Activated CD8-positive, alpha-beta T cell treated with anti-CD3 and anti-CD28 coated beads, Interleukin-2, amount 10 ng/mL, durations not matched to agents 7 days and 5 days (primary cell): ENCODE measurements at regions of chr2 and their contacts with region 1.

Region 1: GRCh38 chr2:26345545-26346453 is at the start of gene SELENOI:
- DNase-seq: peak; percentile 99
- ATAC-seq: peak; percentile 95
- H3K4me3 Mint-ChIP-seq: peak within 1 kb of the TSS; percentile 92
- H3K27ac Mint-ChIP-seq: peak within 1 kb of the TSS; percentile 95
- H3K4me1 Mint-ChIP-seq: peaks cover 43% of the 10 kb centered on the region
- H3K27me3 Mint-ChIP-seq: no peaks in the 10 kb centered on the region
- total RNA-seq, gene SELENOI: 36.8 to 37.6 TPM

Region 2: GRCh38 chr2:26330113-26330549 is 15.7 kb before region 1 on chr2:
- CTCF ChIA-PET with region 1: interaction called, 17 read pairs
- POLR2A ChIA-PET with region 1: interaction called, 5 read pairs
- DNase-seq: peak; percentile 92
- ATAC-seq: peak; percentile 95
- H3K4me3 Mint-ChIP-seq: no peak overlapping the region
- H3K27ac Mint-ChIP-seq: no peak overlapping the region
- H3K4me1 Mint-ChIP-seq: peaks cover 40% of the 10 kb centered on the region
- H3K27me3 Mint-ChIP-seq: no peaks in the 10 kb centered on the region

Region 3: DNA sequence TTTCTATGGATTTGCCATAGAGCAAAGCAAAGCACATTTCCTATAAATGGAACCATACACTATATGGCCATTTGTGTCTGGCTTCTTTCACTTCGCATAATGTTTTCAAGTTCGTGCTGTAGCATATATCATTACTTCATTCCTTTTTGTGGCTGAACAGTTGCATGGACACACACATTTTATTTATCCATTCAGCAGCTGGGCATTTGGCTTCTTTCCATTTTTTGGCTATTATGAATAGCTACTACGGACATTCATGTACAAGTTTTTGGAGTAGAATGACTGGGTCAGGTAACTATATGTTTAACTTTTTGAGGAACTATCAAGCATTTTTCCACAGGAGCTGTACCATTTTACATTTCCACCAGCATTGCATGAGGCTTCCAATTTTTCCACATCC is 10.6 kb before region 1 on chr2:
- CTCF ChIA-PET with region 1: interaction called, 17 read pairs
- POLR2A ChIA-PET with region 1: interaction called, 5 read pairs
- DNase-seq: no peak
- ATAC-seq: no peak
- H3K4me3 Mint-ChIP-seq: no peak overlapping the region
- H3K27ac Mint-ChIP-seq: no peak overlapping the region
- H3K4me1 Mint-ChIP-seq: peaks cover 16% of the 10 kb centered on the region
- H3K27me3 Mint-ChIP-seq: no peaks in the 10 kb centered on the region